ENCODE measurements at regions of chr21 and their contacts with region 1.

Region 1: DNA sequence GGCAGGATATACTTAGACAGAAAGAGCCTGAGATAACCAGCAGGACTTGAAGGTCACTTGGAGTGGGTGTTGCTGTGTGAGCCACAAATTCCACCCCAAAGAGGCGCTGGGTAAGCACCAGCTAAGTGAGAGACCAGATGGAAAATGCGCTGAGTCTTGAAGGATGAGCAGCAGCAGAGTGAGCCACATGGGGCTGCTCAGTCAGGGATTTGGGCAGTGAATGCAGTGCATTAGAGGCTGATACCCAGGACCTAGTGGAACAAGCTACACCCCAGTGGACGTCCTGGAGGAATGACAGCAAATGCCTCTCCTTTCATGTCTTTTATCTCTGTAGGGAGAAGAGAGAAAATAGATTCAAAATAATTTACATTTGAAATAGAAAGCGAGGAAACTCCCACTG is 11.3 kb downstream of the GRIK1 start:
- DNase-seq: no peak
- H3K4me3 ChIP-seq: no peak overlapping the region
- CTCF ChIP-seq: no peak
- POLR2A ChIP-seq: no peak

Region 2: DNA sequence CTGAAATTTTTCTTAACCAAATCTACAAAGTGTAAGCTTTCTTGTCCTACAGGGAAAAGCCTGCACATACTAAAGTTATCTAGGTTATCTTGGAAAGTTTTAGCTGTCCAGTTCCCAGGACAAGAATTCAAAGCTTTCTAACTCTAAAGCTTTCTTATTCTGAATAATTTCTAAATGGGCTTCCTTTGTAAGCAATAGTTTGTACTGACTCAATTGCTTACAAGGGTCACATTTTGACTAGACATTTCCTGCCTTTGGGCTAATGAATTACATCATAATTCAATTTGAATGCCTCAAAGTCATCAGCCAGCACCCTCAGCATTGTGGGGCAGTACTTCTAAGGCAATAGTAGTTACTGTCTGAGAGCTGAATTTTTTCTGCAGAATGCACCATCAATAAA is 1158.9 kb before region 1 on chr21:
- intact Hi-C with region 1: loop called (anchors 10 kb)
- DNase-seq: no peak
- H3K4me3 ChIP-seq: no peak overlapping the region
- CTCF ChIP-seq: no peak
- POLR2A ChIP-seq: no peak

Measured in lower leg skin (tissue), 4 donors.